Activated B cell treated with CpG ODN at 0.5 μM for 24 hours (primary cell): ENCODE measurements at regions of chr10 and their contacts with region 1.

Region 1: GRCh38 chr10:3482200-3483138 is 302.5 kb downstream of the KLF6 start:
- DNase-seq: no peak
- ATAC-seq: no peak
- H3K4me3 Mint-ChIP-seq: peak overlapping the region; percentile 36
- H3K27ac Mint-ChIP-seq: peak overlapping the region; percentile 9
- H3K4me1 Mint-ChIP-seq: peaks cover 68% of the 10 kb centered on the region
- H3K27me3 Mint-ChIP-seq: no peaks in the 10 kb centered on the region
- CTCF ChIP-seq: no peak

Region 2: DNA sequence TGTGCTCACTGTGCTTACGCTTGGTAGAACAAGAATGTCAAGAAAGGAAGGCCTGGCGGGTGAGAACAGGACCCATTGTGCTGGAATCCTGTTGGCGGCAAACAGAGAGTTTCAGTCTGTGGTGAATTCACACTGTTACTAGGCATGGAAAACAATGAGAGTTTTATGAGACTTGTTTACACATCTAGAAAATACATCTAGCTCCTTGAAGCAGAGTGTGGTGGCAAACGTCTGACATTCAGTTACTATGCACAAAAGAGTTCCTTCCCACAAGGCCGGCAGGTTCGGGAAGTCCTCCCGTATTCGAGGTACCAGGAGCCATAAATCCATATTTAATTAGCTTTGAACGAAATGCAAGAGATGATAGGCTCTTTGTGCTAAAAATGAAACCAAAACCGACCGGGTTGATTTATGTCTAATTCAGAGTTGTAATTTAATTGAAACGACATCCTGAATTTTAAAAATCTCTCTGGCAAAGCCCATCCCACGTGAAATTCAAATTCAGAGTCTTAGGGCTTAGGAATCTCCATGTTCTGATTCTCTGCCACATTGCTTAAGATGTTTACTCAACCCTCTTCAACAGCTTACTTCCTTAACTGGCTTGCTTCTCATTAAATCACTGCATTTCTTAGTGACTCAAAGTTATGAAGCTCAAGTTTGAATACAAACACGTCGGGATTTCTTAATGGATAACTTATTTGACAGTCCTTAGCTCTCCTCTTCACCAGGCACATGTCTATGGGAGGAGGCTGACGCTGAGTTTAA is 10.0 kb before region 1 on chr10:
- CTCF ChIA-PET with region 1: interaction called, 3 read pairs
- POLR2A ChIA-PET with region 1: interaction called, 13 read pairs
- intact Hi-C with region 1: loop called (anchors 1 kb)
- DNase-seq: no peak
- ATAC-seq: peak; percentile 42
- H3K4me3 Mint-ChIP-seq: peak overlapping the region; percentile 83
- H3K27ac Mint-ChIP-seq: peak overlapping the region; percentile 86
- H3K4me1 Mint-ChIP-seq: peaks cover 19% of the 10 kb centered on the region
- H3K27me3 Mint-ChIP-seq: no peaks in the 10 kb centered on the region
- CTCF ChIP-seq: no peak

Region 3: DNA sequence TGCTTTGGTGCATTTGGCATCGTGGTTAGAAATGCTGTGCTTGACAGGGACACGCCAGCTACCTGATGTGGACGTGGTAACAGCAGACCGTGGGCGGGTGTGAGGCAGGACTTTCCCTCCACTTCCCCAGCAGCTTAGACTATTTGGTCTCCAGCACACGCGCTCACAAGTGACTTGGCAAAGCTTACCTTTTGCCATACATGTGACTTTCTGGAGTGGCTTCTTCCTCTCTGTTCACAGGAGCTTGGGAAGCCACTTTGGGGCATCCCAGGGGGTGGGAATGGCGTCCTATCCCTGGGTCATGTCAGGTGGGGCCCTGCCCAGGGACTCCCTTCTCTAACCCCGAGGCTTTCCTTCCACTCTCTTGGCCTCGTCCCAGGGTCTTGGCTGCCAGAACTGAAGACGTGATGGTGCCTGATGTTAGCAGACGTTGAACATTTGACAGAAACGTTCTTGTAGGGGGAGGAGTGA is 531.2 kb after region 1 on chr10:
- CTCF ChIA-PET with region 1: no interaction called
- POLR2A ChIA-PET with region 1: no interaction called
- intact Hi-C with region 1: loop called (anchors 10 kb)
- DNase-seq: peak; percentile 32
- ATAC-seq: peak; percentile 81
- H3K4me3 Mint-ChIP-seq: peak overlapping the region; percentile 53
- H3K27ac Mint-ChIP-seq: peak overlapping the region; percentile 83
- H3K4me1 Mint-ChIP-seq: peaks cover 33% of the 10 kb centered on the region
- H3K27me3 Mint-ChIP-seq: no peaks in the 10 kb centered on the region
- CTCF ChIP-seq: no peak

Region 4: DNA sequence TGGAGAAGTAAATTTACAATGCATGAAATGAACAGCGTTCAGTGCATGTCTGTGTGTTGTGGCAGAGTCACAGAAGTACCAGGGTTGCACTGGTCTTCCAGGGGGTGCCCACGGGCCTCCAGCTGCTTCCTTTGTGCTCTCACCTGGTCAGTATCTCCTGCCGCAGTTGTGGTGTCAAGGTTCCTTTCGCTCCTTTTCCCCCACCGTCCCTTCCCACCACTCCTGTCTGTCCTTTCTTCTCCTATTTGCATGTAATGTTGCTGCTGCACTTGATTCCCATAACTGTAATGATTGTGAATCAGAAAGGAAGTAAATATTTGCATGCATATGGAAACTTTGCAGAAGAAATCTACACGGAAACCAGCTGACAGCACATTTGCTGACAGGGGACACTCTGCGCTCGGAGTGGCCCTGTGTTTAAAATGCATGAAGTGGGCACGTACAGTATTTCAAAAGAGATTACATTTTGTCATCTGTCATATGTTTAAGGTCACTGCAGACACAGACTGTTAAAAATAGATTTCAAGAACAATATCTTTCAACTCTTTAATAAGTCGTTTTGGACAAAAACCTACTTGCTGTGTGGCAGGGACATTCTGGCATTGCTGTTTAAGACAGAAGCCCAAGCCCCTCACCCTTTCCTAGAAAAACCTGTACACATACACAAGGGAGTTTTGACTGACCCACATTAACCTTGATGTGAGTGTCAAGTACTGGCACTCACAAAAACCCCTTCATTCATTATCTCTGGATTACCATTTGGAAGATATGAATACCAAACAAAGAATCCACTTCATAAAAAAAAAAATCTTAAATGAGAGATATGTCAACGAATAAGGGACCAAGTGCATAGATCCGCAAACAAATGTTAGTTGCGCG is 639.3 kb after region 1 on chr10:
- CTCF ChIA-PET with region 1: no interaction called
- POLR2A ChIA-PET with region 1: no interaction called
- intact Hi-C with region 1: loop called (anchors 5 kb)
- DNase-seq: peak; percentile 30
- ATAC-seq: peak; percentile 72
- H3K4me3 Mint-ChIP-seq: peak overlapping the region; percentile 76
- H3K27ac Mint-ChIP-seq: peak overlapping the region; percentile 74
- H3K4me1 Mint-ChIP-seq: peaks cover 37% of the 10 kb centered on the region
- H3K27me3 Mint-ChIP-seq: no peaks in the 10 kb centered on the region
- CTCF ChIP-seq: no peak

Region 5: GRCh38 chr10:4333459-4333894 is 851.0 kb after region 1 on chr10:
- CTCF ChIA-PET with region 1: no interaction called
- POLR2A ChIA-PET with region 1: no interaction called
- intact Hi-C with region 1: loop called (anchors 5 kb)
- DNase-seq: no peak
- ATAC-seq: peak; percentile 28
- H3K4me3 Mint-ChIP-seq: no peak overlapping the region
- H3K27ac Mint-ChIP-seq: no peak overlapping the region
- H3K4me1 Mint-ChIP-seq: no peaks in the 10 kb centered on the region
- H3K27me3 Mint-ChIP-seq: no peaks in the 10 kb centered on the region
- CTCF ChIP-seq: no peak